Activated CD8-positive, alpha-beta T cell treated with anti-CD3 and anti-CD28 coated beads for 36 hours (primary cell): ENCODE measurements at regions of chr13 and their contacts with region 1.

Region 1: GRCh38 chr13:51070005-51070649 is 40.9 kb downstream of the C13orf42 start:
- DNase-seq: peak; percentile 89
- ATAC-seq: peak; percentile 90
- H3K4me3 Mint-ChIP-seq: no peak overlapping the region
- H3K27ac Mint-ChIP-seq: no peak overlapping the region
- H3K4me1 Mint-ChIP-seq: peaks cover 5% of the 10 kb centered on the region
- H3K27me3 Mint-ChIP-seq: peaks cover 11% of the 10 kb centered on the region
- CTCF ChIP-seq: peak; percentile 96

Region 2: GRCh38 chr13:50801087-50801931 is 268.8 kb before region 1 on chr13:
- CTCF ChIA-PET with region 1: interaction called, 9 read pairs
- POLR2A ChIA-PET with region 1: no interaction called
- intact Hi-C with region 1: loop called (anchors 5 kb)
- DNase-seq: peak; percentile 71
- ATAC-seq: peak; percentile 98
- H3K4me3 Mint-ChIP-seq: no peak overlapping the region
- H3K27ac Mint-ChIP-seq: no peak overlapping the region
- H3K4me1 Mint-ChIP-seq: peaks cover 9% of the 10 kb centered on the region
- H3K27me3 Mint-ChIP-seq: no peaks in the 10 kb centered on the region
- CTCF ChIP-seq: peak; percentile 71

Region 3: GRCh38 chr13:51058461-51059167 is 11.5 kb before region 1 on chr13:
- CTCF ChIA-PET with region 1: interaction called, 15 read pairs
- POLR2A ChIA-PET with region 1: no interaction called
- intact Hi-C with region 1: no loop called
- DNase-seq: no peak
- ATAC-seq: no peak
- H3K4me3 Mint-ChIP-seq: no peak overlapping the region
- H3K27ac Mint-ChIP-seq: no peak overlapping the region
- H3K4me1 Mint-ChIP-seq: no peaks in the 10 kb centered on the region
- H3K27me3 Mint-ChIP-seq: no peaks in the 10 kb centered on the region
- CTCF ChIP-seq: no peak

Region 4: DNA sequence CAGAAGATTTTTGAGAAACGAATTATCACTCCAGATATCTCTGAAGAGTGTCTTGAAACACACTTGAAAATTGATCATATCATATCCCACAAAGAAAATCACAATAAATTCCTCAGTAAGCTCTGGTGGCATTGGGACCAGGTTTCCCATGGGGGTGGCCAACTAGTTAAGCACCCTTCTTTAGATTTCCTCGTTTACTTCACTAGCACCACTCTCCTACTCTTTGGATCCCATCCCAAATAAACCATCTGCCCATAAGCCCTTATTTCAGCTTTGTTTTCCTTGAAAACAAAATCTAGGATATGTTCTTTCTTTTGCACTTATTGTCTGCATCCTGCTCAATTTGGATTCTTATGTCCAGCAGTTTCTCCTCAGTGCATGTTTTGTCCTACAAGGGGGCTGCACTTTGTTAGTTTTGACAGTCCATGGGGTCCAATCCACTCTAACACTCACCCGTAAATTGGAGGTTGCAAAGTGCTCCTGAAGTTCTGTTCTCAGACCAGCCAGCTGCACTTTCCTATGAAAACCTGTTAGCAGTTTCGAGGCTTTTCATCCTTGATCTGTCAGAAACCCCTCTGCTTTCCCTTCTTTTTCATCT is 111.8 kb after region 1 on chr13:
- CTCF ChIA-PET with region 1: no interaction called
- POLR2A ChIA-PET with region 1: no interaction called
- intact Hi-C with region 1: no loop called
- DNase-seq: no peak
- ATAC-seq: no peak
- H3K4me3 Mint-ChIP-seq: no peak overlapping the region
- H3K27ac Mint-ChIP-seq: no peak overlapping the region
- H3K4me1 Mint-ChIP-seq: no peaks in the 10 kb centered on the region
- H3K27me3 Mint-ChIP-seq: peaks cover 24% of the 10 kb centered on the region
- CTCF ChIP-seq: no peak

Region 5: DNA sequence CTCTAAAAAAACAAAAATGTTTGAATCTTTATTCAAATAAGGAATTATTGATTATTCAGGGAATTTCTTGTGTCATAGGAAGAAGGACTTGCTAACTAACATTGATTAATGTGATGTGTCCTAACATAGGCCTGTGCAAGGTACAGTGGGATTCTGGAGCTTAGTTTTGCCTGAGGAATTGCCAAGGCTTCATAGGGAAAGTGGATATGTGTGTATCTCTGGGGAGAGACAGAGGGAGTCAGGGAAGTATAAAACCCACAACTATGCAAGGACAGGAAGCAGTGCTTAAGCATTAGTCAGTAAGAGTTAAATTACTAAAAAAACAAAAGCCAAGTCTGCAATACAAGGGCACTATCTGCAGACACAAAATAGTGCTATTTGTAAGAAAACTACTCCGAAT is 573.8 kb after region 1 on chr13:
- CTCF ChIA-PET with region 1: no interaction called
- POLR2A ChIA-PET with region 1: no interaction called
- intact Hi-C with region 1: no loop called
- DNase-seq: no peak
- ATAC-seq: no peak
- H3K4me3 Mint-ChIP-seq: no peak overlapping the region
- H3K27ac Mint-ChIP-seq: peak overlapping the region; percentile 68
- H3K4me1 Mint-ChIP-seq: peaks cover 44% of the 10 kb centered on the region
- H3K27me3 Mint-ChIP-seq: no peaks in the 10 kb centered on the region
- CTCF ChIP-seq: no peak